PC-9 (cell line): ENCODE measurements at regions of chr17 and their contacts with region 1.

Region 1: GRCh38 chr17:68277807-68278206 is 13.1 kb downstream of the SLC16A6 start:
- DNase-seq: no peak
- H3K4me3 ChIP-seq: no peak overlapping the region
- H3K27ac ChIP-seq: no peak overlapping the region
- H3K4me1 ChIP-seq: no peaks in the 10 kb centered on the region
- H3K27me3 ChIP-seq: no peaks in the 10 kb centered on the region
- CTCF ChIP-seq: no peak

Region 2: DNA sequence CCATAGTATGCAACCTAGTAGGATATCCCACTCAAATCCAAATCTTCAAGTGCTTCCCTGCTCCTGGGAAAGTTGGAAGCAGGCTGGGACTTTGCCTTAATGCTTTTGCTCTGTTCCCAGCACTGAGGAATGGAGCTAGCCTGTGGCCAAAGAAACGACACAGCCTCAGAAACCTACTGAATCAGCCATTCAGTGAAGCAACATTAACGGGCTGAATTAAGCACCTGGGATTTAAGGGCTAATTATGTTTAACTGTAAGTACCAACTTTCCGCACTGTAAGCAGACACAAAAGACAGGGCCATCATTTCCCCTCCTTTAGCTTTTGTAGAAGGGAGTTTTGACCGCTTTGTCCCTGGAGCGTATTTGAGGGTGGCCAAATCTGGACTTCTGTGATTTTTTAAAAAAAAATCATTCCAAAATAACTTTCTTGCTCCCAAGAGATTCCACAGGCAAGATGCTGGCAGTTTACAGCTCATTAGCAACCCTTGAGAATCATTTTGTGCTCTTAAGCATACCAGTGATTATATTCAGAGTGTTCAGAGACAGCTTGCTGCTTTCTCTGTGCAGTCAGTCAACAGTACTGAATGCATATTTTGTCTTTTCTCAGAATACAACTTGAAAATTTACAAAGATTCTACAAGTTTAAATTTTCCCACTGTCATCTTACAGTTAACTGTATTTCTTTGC is 577.6 kb before region 1 on chr17:
- CTCF ChIA-PET with region 1: interaction called, 16 read pairs
- POLR2A ChIA-PET with region 1: no interaction called
- intact Hi-C with region 1: no loop called
- DNase-seq: no peak
- H3K4me3 ChIP-seq: no peak overlapping the region
- H3K27ac ChIP-seq: no peak overlapping the region
- H3K4me1 ChIP-seq: no peaks in the 10 kb centered on the region
- H3K27me3 ChIP-seq: no peaks in the 10 kb centered on the region
- CTCF ChIP-seq: no peak

Region 3: DNA sequence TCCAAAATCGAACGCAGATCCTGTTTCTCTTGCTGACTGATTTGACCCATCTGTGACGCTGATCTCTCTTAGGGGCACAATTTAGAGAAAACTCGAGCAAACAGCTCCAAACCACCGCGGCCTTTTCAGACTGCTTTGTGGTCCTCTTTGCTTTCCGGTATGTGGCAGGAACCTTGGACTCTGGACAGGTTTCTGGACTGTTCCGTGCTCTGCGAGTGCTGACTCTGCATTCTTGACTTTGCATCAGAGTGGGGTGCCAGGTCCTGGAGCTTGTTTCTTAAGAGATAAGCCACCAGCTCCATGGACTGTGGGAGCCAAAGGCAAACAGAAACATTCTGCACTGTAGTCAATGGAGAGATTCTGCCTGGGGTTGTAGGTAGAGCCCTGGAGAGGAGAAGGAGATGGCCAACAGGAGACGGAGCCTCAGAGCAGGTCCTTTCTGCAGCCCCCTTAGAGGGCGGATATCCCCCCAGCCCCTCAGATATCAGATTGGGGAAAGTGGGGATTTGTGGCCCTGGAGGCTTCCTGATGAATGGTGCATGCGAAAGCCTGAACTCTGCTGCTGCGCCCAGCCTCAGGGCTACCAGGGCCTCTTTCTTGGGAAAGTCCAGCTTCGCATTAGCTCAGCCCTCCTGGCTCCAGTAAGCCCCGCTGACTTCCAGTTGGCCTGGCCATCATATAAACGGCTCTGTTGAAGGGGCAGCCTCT is 113.9 kb after region 1 on chr17:
- CTCF ChIA-PET with region 1: no interaction called
- POLR2A ChIA-PET with region 1: no interaction called
- intact Hi-C with region 1: no loop called
- DNase-seq: no peak
- H3K4me3 ChIP-seq: no peak overlapping the region
- H3K27ac ChIP-seq: no peak overlapping the region
- H3K4me1 ChIP-seq: no peaks in the 10 kb centered on the region
- H3K27me3 ChIP-seq: no peaks in the 10 kb centered on the region
- CTCF ChIP-seq: no peak